HEK293 (cell line): ENCODE measurements at regions of chr2 and their contacts with region 1.

Region 1: DNA sequence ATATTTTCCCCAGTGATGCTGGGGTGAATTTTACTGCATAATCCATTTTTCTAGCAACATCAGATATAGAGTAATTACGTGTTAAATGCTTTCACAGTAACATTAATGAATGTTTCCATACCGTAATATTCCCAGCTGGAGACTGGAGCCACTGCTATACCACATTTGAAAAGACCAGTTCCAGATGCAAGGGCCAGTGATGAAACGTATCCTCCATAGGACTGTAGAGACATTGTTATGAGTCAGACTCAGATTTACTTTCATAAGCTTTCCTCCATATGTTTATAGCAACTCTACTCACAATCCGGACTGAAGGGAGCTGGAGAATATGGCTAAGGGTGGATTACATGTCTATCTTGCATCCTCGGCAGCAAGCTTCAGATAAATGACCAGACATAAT is 22.7 kb upstream of the GCG start:
- H3K4me3 ChIP-seq: no peak overlapping the region
- H3K27ac ChIP-seq: no peak overlapping the region
- H3K4me1 ChIP-seq: no peaks in the 10 kb centered on the region
- CTCF ChIP-seq: no peak

Region 2: DNA sequence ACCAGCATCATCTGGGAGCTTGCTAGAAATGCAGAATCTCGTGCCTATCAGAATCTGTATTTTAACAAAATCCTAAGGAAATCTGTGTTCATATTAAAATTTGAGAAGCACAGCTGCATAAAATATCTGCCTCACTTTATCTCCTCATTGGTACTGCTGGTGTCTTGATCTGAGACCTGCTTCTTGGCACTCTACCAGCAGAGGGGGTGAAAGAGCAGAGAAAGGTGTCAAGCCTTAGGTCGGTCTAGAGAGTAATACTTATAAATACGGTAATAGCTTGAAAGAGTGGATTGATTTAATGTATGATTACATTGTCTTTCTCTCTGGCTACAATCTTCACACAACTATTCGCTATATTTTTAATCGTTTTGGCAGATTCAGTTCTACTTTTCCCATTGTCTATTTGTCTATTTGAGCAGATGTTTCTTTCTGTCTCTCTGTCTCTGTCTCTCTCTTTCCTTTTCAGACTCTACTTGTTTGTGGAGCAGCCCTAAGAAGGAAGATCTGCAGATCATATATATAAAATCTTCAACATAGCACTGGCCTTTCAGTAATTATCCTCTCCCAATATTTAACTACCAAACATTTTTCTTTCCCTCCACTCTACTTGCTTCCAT is 21.0 kb before region 1 on chr2:
- CTCF ChIA-PET with region 1: interaction called, 26 read pairs
- POLR2A ChIA-PET with region 1: no interaction called
- H3K4me3 ChIP-seq: no peak overlapping the region
- H3K27ac ChIP-seq: no peak overlapping the region
- H3K4me1 ChIP-seq: no peaks in the 10 kb centered on the region
- CTCF ChIP-seq: peak; percentile 30; the same call in 1 of the 2 replicates